A549 (cell line): ENCODE measurements at regions of chr2 and their contacts with region 1.

Region 1: GRCh38 chr2:85712849-85713602 is 18.9 kb downstream of the GNLY start:
- DNase-seq: peak in 1 of 2 experiments; percentile 54
- ATAC-seq: peak; percentile 35 to 43; a peak in 3 of 6 replicates
- H3K4me3 ChIP-seq: no peak overlapping the region
- H3K27ac ChIP-seq: peak overlapping the region; percentile 11 to 68; a peak in 2 of 6 replicates
- H3K4me1 ChIP-seq: peaks cover 16% of the 10 kb centered on the region; the same call in 2 of the 3 replicates
- CTCF ChIP-seq: no peak
- EP300 ChIP-seq: no peak
- POLR2A ChIP-seq: no peak
- RAD21 ChIP-seq: no peak

Region 2: GRCh38 chr2:85066874-85067351 is 646.1 kb before region 1 on chr2:
- CTCF ChIA-PET with region 1: no interaction called
- POLR2A ChIA-PET with region 1: no interaction called
- DNase-seq: peak; percentile 77 to 87
- ATAC-seq: peak; percentile 88 to 93
- H3K4me3 ChIP-seq: peak overlapping the region; percentile 21; the same call in 2 of the 3 replicates
- H3K27ac ChIP-seq: peak overlapping the region; percentile 45 to 68; a peak in 4 of 6 replicates
- H3K4me1 ChIP-seq: no peaks in the 10 kb centered on the region
- CTCF ChIP-seq: peak; percentile 97
- EP300 ChIP-seq: no peak
- POLR2A ChIP-seq: no peak
- RAD21 ChIP-seq: peak; percentile 94

Region 3: GRCh38 chr2:85723707-85724360 is 10.8 kb after region 1 on chr2:
- CTCF ChIA-PET with region 1: interaction called, 122 read pairs
- POLR2A ChIA-PET with region 1: no interaction called
- DNase-seq: no peak
- ATAC-seq: no peak
- H3K4me3 ChIP-seq: no peak overlapping the region
- H3K27ac ChIP-seq: no peak overlapping the region; a peak in 1 of 6 replicates
- H3K4me1 ChIP-seq: peaks cover 12% of the 10 kb centered on the region
- CTCF ChIP-seq: no peak
- EP300 ChIP-seq: no peak
- POLR2A ChIP-seq: no peak
- RAD21 ChIP-seq: no peak